Activated T-helper 1 cell treated with anti-CD3 and anti-CD28 coated beads, Interleukin-12 subunit alpha, Interleukin-12 subunit beta, Interleukin-2, Interleukin-4 antibody, amounts not matched to agents 30 ng/mL and 10 ng/mL and 1 ng/mL, durations not matched to agents 14 hours and 24 hours and 36 hours (primary cell): ENCODE measurements at regions of chr1 and their contacts with region 1.

Region 1: DNA sequence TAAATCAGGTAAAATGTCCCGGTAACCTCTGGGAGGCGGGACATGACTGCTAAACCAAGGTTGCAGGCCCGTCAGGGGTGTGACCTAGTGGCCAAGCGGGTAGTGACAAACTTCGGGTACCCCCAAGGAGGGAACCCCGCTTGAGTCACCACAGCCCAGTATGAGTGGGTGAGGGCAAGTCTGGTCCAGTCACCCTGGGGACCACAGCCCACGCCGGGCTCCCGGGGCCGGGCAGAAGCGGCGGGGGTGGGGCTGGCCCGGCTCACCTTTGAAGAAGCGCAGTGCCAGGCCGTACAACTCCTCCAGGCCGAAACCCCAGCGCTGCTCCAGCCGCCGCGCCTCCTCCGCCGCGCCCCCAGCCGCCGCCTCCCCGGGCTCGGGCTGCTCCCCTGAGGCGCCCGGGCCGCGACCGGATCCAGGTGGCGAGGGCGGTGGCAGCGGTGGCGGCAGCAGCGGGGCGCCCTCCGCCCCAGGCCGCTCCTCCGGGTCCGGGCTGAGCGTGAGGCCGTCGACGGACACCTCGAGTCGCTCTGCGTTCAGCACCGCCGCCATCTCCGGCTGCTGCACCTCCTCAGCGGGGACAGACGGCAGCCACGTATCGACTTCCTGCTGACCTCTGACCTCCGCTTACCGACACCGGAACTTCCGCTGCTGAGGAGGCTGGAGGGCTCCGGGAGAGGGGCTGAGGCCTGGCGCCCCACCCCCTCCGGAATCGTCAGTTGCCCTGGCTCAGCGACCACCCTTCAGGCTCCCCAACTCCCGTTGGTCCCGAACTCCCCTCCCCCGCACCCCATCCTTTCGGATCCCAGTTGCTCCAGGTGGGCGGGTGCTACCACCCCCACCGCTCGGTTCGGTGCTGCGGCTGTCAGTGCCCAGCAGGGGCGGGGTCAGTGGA is at the start of gene ACBD3:
- DNase-seq: peak; percentile 84
- H3K4me3 Mint-ChIP-seq: peak within 1 kb of the TSS; percentile 96
- H3K27ac Mint-ChIP-seq: peak within 1 kb of the TSS; percentile 92
- H3K4me1 Mint-ChIP-seq: peaks cover 35% of the 10 kb centered on the region
- H3K27me3 Mint-ChIP-seq: no peaks in the 10 kb centered on the region
- total RNA-seq, gene ACBD3: 23.6 and 26.0 TPM in 2 replicates

Region 2: GRCh38 chr1:226201029-226201593 is 14.7 kb after region 1 on chr1:
- intact Hi-C with region 1: loop called (anchors 1 kb)
- DNase-seq: no peak
- H3K4me3 Mint-ChIP-seq: no peak overlapping the region
- H3K27ac Mint-ChIP-seq: no peak overlapping the region
- H3K4me1 Mint-ChIP-seq: no peaks in the 10 kb centered on the region
- H3K27me3 Mint-ChIP-seq: peaks cover 12% of the 10 kb centered on the region

Region 3: DNA sequence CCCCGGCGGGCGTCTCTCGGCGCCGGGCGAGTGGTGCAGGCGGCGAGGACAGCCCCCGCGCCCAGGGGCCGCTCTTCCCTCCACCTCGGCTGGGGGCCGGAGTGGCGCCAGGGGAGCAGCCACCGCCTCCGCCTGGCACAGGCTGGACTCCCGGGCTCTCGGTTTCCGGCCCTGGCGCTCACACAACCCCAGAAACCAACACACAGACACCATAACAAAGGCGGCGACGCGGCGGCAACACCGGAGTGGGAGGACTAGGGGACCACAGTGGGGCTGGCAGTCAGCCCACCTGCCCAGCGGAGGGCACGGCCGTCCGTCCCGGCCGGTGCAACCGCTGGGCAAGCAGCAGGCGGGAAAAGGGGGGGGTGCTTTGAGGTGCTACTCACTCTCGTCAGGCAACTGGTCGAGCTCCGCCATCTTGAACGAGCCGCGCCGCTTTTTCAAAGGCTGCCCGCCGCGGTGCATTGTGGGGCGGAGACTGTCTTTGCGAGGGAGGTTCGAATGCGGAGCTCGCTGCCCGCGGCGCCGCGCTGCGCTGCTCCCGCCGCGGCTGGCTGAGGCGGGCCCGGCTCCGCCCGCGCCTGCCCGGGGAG is 122.4 kb after region 1 on chr1 and contains the start of gene LIN9:
- intact Hi-C with region 1: loop called (anchors 1 kb)
- DNase-seq: peak; percentile 90
- H3K4me3 Mint-ChIP-seq: peak within 1 kb of the TSS; percentile 95
- H3K27ac Mint-ChIP-seq: peak within 1 kb of the TSS; percentile 86
- H3K4me1 Mint-ChIP-seq: peaks cover 50% of the 10 kb centered on the region
- H3K27me3 Mint-ChIP-seq: peaks cover 16% of the 10 kb centered on the region
- total RNA-seq, gene LIN9: 11.7 and 12.1 TPM in 2 replicates

Region 4: GRCh38 chr1:226370144-226370923 is 184.0 kb after region 1 on chr1:
- intact Hi-C with region 1: no loop called
- DNase-seq: no peak
- H3K4me3 Mint-ChIP-seq: no peak overlapping the region
- H3K27ac Mint-ChIP-seq: no peak overlapping the region
- H3K4me1 Mint-ChIP-seq: peaks cover 3% of the 10 kb centered on the region
- H3K27me3 Mint-ChIP-seq: no peaks in the 10 kb centered on the region